Activated naive CD4-positive, alpha-beta T cell treated with anti-CD3 and anti-CD28 coated beads for 36 hours (primary cell): ENCODE measurements at regions of chr1 and their contacts with region 1.

Region 1: GRCh38 chr1:174174461-174175329 is 15.4 kb downstream of the RABGAP1L start:
- DNase-seq: peak; percentile 71
- H3K4me3 Mint-ChIP-seq: no peak overlapping the region
- H3K27ac Mint-ChIP-seq: no peak overlapping the region
- H3K4me1 Mint-ChIP-seq: peaks cover 35% of the 10 kb centered on the region
- H3K27me3 Mint-ChIP-seq: no peaks in the 10 kb centered on the region

Region 2: GRCh38 chr1:174097426-174097825 is 77.3 kb before region 1 on chr1:
- CTCF ChIA-PET with region 1: no interaction called
- intact Hi-C with region 1: no loop called
- DNase-seq: no peak
- H3K4me3 Mint-ChIP-seq: no peak overlapping the region
- H3K27ac Mint-ChIP-seq: no peak overlapping the region
- H3K4me1 Mint-ChIP-seq: no peaks in the 10 kb centered on the region
- H3K27me3 Mint-ChIP-seq: peaks cover 2% of the 10 kb centered on the region

Region 3: DNA sequence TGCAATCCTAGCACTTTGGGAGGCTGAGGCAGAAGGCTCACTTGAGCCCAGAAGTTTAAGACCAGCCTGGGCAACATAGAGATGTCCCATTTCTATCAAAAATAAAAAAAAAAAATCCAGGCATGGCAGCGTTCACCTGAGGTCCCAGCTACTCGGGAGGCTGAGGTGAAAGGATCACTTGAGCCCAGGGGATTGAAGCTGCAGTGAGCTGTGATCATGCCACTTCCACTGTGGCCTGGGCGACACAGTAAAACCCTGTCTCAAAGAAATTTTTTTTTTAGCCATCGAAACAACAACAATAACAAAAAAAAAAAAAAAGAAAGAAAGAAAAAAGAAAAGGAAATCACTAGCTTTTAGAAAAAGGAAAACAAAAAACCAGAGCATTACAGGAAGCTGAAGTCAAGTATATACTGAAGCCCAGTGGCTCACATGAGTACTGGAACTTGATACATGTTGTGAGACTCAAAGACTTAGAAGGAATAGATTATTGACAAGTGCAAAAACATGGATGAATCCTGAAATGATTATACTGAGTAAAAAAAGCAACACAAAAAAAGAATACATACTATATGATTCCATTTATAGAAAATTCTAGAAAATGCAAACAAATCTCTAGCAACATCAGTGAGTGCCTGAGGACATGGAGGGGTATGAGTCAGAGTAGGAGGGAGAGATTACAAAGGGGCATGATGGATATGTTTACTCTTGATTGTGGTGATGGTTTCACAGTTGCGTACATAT is 21.4 kb before region 1 on chr1:
- CTCF ChIA-PET with region 1: interaction called, 6 read pairs
- intact Hi-C with region 1: loop called (anchors 1 kb)
- DNase-seq: no peak
- H3K4me3 Mint-ChIP-seq: no peak overlapping the region
- H3K27ac Mint-ChIP-seq: no peak overlapping the region
- H3K4me1 Mint-ChIP-seq: peaks cover 40% of the 10 kb centered on the region
- H3K27me3 Mint-ChIP-seq: no peaks in the 10 kb centered on the region

Region 4: GRCh38 chr1:174204697-174205308 is 30.1 kb after region 1 on chr1:
- CTCF ChIA-PET with region 1: no interaction called
- intact Hi-C with region 1: loop called (anchors 1 kb)
- DNase-seq: peak; percentile 25
- H3K4me3 Mint-ChIP-seq: no peak overlapping the region
- H3K27ac Mint-ChIP-seq: peak overlapping the region; percentile 55
- H3K4me1 Mint-ChIP-seq: peaks cover 48% of the 10 kb centered on the region
- H3K27me3 Mint-ChIP-seq: no peaks in the 10 kb centered on the region

Region 5: GRCh38 chr1:174398246-174398645 is 223.6 kb after region 1 on chr1:
- CTCF ChIA-PET with region 1: no interaction called
- intact Hi-C with region 1: no loop called
- DNase-seq: no peak
- H3K4me3 Mint-ChIP-seq: no peak overlapping the region
- H3K27ac Mint-ChIP-seq: no peak overlapping the region
- H3K4me1 Mint-ChIP-seq: no peaks in the 10 kb centered on the region
- H3K27me3 Mint-ChIP-seq: no peaks in the 10 kb centered on the region